Left ventricle myocardium inferior (tissue), 1 donor: ENCODE measurements at regions of chr2 and their contacts with region 1.

Region 1: GRCh38 chr2:226800941-226801784 is 1.5 kb upstream of the IRS1 start:
- DNase-seq: peak; percentile 86
- H3K4me3 ChIP-seq: peak overlapping the region; percentile 89
- H3K27ac ChIP-seq: peak overlapping the region; percentile 95
- H3K4me1 ChIP-seq: peaks cover 58% of the 10 kb centered on the region
- H3K27me3 ChIP-seq: no peaks in the 10 kb centered on the region
- CTCF ChIP-seq: no peak

Region 2: GRCh38 chr2:225670111-225670974 is 1130.8 kb before region 1 on chr2:
- intact Hi-C with region 1: loop called (anchors 5 kb)
- DNase-seq: no peak
- H3K4me3 ChIP-seq: no peak overlapping the region
- H3K27ac ChIP-seq: no peak overlapping the region
- H3K4me1 ChIP-seq: no peaks in the 10 kb centered on the region
- H3K27me3 ChIP-seq: no peaks in the 10 kb centered on the region
- CTCF ChIP-seq: peak; percentile 45

Region 3: GRCh38 chr2:225889446-225889850 is 911.7 kb before region 1 on chr2:
- intact Hi-C with region 1: loop called (anchors 2 kb)
- DNase-seq: no peak
- H3K4me3 ChIP-seq: no peak overlapping the region
- H3K27ac ChIP-seq: no peak overlapping the region
- H3K4me1 ChIP-seq: peaks cover 3% of the 10 kb centered on the region
- H3K27me3 ChIP-seq: no peaks in the 10 kb centered on the region
- CTCF ChIP-seq: peak; percentile 82

Region 4: GRCh38 chr2:226215902-226216503 is 585.2 kb before region 1 on chr2:
- intact Hi-C with region 1: loop called (anchors 10 kb)
- DNase-seq: peak; percentile 18
- H3K4me3 ChIP-seq: no peak overlapping the region
- H3K27ac ChIP-seq: no peak overlapping the region
- H3K4me1 ChIP-seq: peaks cover 16% of the 10 kb centered on the region
- H3K27me3 ChIP-seq: no peaks in the 10 kb centered on the region
- CTCF ChIP-seq: peak; percentile 71